MCF 10A (cell line): ENCODE measurements at regions of chr12 and their contacts with region 1.

Region 1: DNA sequence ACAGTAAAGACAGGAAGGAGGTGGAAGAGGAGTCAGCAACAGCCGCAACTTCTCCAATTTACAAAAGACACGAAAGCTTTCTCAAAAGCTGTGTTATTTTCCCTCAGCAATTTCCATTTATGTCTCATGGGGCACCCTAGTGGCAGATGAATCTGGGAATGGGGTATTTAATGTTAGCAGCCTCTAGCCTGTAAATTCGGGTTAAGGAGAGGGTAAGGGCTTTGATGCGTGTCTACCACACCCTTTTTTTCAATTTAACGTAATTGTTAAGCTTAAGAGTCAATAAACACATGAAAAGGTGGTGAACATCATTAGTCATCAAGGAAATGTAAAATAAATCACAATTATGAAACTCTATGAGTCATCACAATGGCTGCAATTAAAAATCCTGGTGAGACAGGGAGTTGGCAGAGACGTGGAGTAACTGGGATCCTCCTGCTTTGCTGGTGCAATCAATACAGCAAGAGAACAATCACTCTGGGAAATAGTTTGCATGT is 986.4 kb downstream of the AACS start:
- DNase-seq: peak; percentile 95
- H3K4me3 Mint-ChIP-seq: peak overlapping the region; percentile 21
- H3K27ac Mint-ChIP-seq: peak overlapping the region; percentile 89
- H3K4me1 Mint-ChIP-seq: peaks cover 41% of the 10 kb centered on the region
- H3K27me3 Mint-ChIP-seq: no peaks in the 10 kb centered on the region
- CTCF ChIP-seq: peak; percentile 49

Region 2: DNA sequence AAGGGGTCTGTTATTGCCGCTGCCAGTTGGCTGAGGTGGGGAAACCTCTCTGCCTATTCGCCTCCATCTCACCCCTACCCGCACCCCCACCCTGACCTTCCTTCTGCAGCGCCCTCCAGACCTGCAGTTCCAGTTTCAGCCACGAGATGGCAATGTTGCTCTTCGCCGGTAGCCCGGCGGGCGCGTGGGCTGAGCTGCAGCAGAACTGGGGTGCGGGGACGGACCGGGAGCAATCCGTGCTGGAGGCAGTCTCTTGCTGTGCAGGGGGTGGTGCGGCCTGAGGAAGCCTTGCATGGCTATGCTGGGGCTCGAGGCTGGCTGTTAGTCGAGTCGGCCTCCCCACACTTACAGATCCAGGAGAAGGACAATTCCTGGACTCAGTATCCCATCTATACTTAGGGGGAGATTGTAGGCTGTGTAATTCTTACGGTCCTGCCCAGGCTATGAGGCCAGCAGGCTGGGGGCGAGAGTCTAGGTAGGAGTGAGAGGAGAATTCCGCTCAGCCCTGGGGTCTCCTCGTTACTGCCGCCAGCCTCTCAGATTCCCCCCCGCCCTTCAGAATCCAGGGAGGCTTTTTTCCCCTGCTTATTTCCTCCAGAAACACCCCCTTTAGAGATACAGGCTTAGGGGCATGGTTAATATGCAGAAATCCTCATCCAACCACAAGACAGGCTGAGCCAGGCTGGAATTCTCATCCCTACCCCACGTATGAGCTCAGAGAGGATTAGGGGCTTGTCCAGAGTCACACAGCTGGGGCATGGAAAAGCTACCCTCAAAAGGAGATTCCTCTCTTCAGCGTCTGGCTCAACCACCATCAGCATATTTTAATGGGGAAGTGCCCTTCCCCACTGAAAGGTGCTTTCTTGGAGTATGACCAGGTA is 868.2 kb before region 1 on chr12:
- CTCF ChIA-PET with region 1: no interaction called
- POLR2A ChIA-PET with region 1: no interaction called
- intact Hi-C with region 1: loop called (anchors 10 kb)
- DNase-seq: peak; percentile 66
- H3K4me3 Mint-ChIP-seq: no peak overlapping the region
- H3K27ac Mint-ChIP-seq: no peak overlapping the region
- H3K4me1 Mint-ChIP-seq: peaks cover 5% of the 10 kb centered on the region
- H3K27me3 Mint-ChIP-seq: peaks cover 49% of the 10 kb centered on the region
- CTCF ChIP-seq: peak; percentile 99

Region 3: DNA sequence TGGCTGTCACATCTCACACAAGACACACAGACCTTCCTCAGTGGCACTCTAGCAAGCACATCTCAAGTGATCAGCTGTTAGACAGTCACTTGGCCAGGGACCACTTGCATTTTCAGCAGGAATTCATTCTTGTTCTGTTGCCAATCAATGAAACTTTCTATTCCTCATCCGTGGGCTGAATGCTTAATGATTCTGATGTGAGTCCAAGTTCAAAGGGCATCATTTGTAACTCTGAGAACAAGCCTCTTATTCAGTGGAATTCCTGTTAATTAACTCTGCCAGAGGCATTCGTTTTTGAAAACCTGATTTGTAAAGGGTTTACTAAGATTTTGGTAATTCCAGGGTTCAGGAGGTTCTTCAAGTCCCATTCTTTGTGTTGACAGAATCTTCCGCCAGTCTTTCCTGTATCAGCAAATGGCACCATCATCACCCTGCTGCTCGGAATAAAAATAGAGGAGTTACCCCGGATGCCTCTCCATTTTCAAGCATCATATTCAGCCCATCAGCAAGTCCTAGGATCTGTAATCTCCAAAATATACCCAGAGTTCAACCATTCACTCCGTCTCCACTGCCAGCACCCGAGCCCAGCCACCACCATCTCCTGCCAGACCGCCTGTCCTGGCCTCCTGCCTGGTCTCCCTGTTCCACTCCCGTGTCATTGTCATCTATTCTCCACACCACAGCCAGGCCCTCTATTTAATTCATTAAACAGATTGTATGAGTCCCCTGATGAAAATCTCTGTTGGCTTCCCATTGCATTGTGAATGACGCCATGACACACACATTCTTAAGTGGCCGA is 513.1 kb before region 1 on chr12:
- CTCF ChIA-PET with region 1: interaction called, 3 read pairs
- POLR2A ChIA-PET with region 1: interaction called, 4 read pairs
- intact Hi-C with region 1: loop called (anchors 5 kb)
- DNase-seq: no peak
- H3K4me3 Mint-ChIP-seq: no peak overlapping the region
- H3K27ac Mint-ChIP-seq: no peak overlapping the region
- H3K4me1 Mint-ChIP-seq: peaks cover 5% of the 10 kb centered on the region
- H3K27me3 Mint-ChIP-seq: no peaks in the 10 kb centered on the region
- CTCF ChIP-seq: no peak

Region 4: GRCh38 chr12:125983093-125983783 is 68.4 kb before region 1 on chr12:
- CTCF ChIA-PET with region 1: no interaction called
- POLR2A ChIA-PET with region 1: no interaction called
- intact Hi-C with region 1: loop called (anchors 1 kb)
- DNase-seq: peak; percentile 88
- H3K4me3 Mint-ChIP-seq: peak overlapping the region; percentile 82
- H3K27ac Mint-ChIP-seq: peak overlapping the region; percentile 83
- H3K4me1 Mint-ChIP-seq: no peaks in the 10 kb centered on the region
- H3K27me3 Mint-ChIP-seq: no peaks in the 10 kb centered on the region
- CTCF ChIP-seq: no peak

Region 5: GRCh38 chr12:126084480-126084879 is 32.8 kb after region 1 on chr12:
- CTCF ChIA-PET with region 1: no interaction called
- POLR2A ChIA-PET with region 1: no interaction called
- intact Hi-C with region 1: loop called (anchors 2 kb)
- DNase-seq: peak; percentile 47
- H3K4me3 Mint-ChIP-seq: no peak overlapping the region
- H3K27ac Mint-ChIP-seq: no peak overlapping the region
- H3K4me1 Mint-ChIP-seq: no peaks in the 10 kb centered on the region
- H3K27me3 Mint-ChIP-seq: no peaks in the 10 kb centered on the region
- CTCF ChIP-seq: no peak